ENCODE measurements at regions of chr3 and their contacts with region 1.

Region 1: DNA sequence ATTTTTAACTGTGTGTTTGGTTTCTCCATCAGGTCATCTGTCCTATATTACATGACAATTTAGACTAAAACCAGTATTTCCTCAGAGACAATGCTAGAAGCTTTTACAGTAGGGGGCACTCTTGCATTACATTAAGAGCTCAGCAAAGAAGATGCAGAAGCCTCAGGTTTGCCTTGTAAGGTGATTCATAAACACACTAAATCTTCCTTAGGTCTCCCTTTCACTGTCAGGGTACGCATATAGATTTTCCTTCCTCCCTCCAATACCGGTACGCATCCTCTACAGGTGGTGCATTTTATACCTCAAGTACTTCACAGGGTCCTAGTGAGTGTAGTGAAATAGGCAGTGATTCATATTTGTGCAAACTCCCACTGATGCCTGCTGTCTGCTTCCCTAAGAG is 46.5 kb downstream of the CD86 start:
- DNase-seq: peak; percentile 92
- ATAC-seq: peak; percentile 66
- H3K4me3 ChIP-seq: peak overlapping the region; percentile 17; the same call in 1 of the 2 replicates
- H3K27ac ChIP-seq: peak overlapping the region; percentile 76
- H3K4me1 ChIP-seq: peaks cover 71% of the 10 kb centered on the region
- H3K27me3 ChIP-seq: no peaks in the 10 kb centered on the region
- CTCF ChIP-seq: peak; percentile 57 to 88 (median 70)
- EP300 ChIP-seq: no peak
- POLR2A ChIP-seq: no peak
- RAD21 ChIP-seq: peak; percentile 97

Region 2: DNA sequence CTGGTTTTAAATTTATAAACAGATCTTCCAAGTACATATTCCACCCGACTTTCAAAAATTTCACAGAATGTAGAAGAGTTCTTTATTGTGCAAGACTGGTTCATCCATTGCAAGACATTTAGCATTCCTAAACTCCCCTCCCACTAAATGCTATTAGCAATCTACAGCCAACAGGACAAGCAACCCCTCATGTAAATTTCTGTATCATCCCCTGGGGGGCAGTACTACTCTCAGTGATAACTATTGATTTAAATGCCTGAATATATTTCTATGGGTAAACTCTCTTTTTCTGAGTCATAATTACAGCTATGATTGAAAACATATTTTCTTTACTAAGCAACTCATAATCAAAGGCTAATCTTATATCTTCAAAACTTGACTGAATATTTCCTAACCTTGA is 218.1 kb before region 1 on chr3:
- CTCF ChIA-PET with region 1: interaction called, 3 read pairs
- POLR2A ChIA-PET with region 1: no interaction called
- RAD21 ChIA-PET with region 1: interaction called, 13 read pairs
- SMC1A ChIA-PET with region 1: interaction called, 21 read pairs
- in situ Hi-C with region 1: no loop called
- intact Hi-C with region 1: loop called (anchors 1 kb)
- DNase-seq: no peak
- ATAC-seq: peak; percentile 73
- H3K4me3 ChIP-seq: no peak overlapping the region
- H3K27ac ChIP-seq: no peak overlapping the region
- H3K4me1 ChIP-seq: no peaks in the 10 kb centered on the region
- H3K27me3 ChIP-seq: no peaks in the 10 kb centered on the region
- CTCF ChIP-seq: peak; percentile 21 to 38 (median 27); a peak in 1 of 6 replicates
- EP300 ChIP-seq: no peak
- POLR2A ChIP-seq: no peak
- RAD21 ChIP-seq: peak; percentile 48

Region 3: DNA sequence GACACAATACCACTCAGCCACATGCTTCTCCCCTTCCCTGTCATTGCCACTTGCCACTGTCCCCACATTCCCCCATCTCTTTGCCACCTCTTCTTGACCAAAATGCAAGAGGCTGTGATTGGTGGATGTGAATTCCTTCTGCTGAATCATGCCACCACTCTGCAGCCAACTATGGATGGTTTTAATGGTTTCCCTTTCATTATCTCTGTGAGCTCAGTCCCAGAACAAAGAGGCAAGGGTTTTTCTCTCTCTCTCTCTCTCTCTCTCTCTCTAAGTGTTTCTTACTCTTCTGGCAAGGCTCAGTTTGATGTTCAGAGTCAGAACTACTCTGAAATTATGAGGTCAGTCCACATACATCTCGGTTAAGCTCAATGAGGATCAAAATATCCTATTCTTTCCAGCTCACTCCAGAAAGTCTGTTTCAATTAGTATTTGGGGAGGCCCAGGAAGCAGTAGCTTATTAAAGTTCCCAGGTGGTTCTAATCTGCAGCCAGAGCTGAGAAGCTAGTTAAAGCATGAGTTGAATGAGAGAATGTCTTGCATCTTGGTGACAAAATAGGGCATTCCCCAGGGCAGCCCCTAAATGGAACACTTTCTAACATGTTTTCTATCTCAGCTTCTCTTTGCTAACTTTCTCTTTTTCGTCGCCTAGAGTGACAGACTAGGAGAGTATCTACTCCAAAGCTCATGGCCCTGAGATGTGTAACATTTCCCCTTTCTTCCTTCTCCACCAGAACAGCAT is 71.1 kb before region 1 on chr3:
- CTCF ChIA-PET with region 1: interaction called, 16 read pairs
- POLR2A ChIA-PET with region 1: interaction called, 3 read pairs
- RAD21 ChIA-PET with region 1: interaction called, 38 read pairs
- SMC1A ChIA-PET with region 1: interaction called, 32 read pairs
- in situ Hi-C with region 1: no loop called
- intact Hi-C with region 1: no loop called
- DNase-seq: peak; percentile 74
- ATAC-seq: peak; percentile 86
- H3K4me3 ChIP-seq: peak overlapping the region; percentile 41; the same call in 1 of the 2 replicates
- H3K27ac ChIP-seq: peak overlapping the region; percentile 89
- H3K4me1 ChIP-seq: peaks cover 37% of the 10 kb centered on the region
- H3K27me3 ChIP-seq: no peaks in the 10 kb centered on the region
- CTCF ChIP-seq: no peak
- EP300 ChIP-seq: no peak
- POLR2A ChIP-seq: 0 out of 2 replicates have a peak, but pooled peaks have one; percentile 25
- RAD21 ChIP-seq: peak; percentile 11; the same call in 1 of the 2 replicates

Region 4: DNA sequence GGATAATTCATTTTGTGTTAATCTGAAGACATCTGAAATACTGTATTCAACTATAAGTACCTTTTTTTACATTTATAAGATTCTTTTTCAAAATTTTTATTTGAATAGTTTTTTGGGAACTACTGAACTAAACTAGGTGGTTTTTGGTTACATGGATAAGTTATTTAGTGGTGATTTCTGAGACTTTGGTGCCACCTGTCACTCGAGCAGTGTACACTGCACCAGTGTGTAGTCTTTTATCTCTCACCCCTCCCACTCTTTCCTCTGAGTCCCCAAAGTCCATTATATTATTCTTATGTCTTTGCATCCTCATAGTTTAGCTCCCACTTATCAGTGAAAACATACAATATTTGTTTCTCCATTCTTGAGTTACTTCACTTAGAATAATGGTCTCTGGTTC is 11.1 kb after region 1 on chr3:
- CTCF ChIA-PET with region 1: interaction called, 58 read pairs
- POLR2A ChIA-PET with region 1: interaction called, 10 read pairs
- RAD21 ChIA-PET with region 1: interaction called, 38 read pairs
- SMC1A ChIA-PET with region 1: interaction called, 78 read pairs
- in situ Hi-C with region 1: no loop called
- intact Hi-C with region 1: no loop called
- DNase-seq: no peak
- ATAC-seq: peak; percentile 71; the same call in 2 of the 3 replicates
- H3K4me3 ChIP-seq: no peak overlapping the region
- H3K27ac ChIP-seq: no peak overlapping the region
- H3K4me1 ChIP-seq: peaks cover 8% of the 10 kb centered on the region; the same call in 1 of the 2 replicates
- H3K27me3 ChIP-seq: no peaks in the 10 kb centered on the region
- CTCF ChIP-seq: no peak
- EP300 ChIP-seq: no peak
- POLR2A ChIP-seq: no peak
- RAD21 ChIP-seq: no peak

Region 5: DNA sequence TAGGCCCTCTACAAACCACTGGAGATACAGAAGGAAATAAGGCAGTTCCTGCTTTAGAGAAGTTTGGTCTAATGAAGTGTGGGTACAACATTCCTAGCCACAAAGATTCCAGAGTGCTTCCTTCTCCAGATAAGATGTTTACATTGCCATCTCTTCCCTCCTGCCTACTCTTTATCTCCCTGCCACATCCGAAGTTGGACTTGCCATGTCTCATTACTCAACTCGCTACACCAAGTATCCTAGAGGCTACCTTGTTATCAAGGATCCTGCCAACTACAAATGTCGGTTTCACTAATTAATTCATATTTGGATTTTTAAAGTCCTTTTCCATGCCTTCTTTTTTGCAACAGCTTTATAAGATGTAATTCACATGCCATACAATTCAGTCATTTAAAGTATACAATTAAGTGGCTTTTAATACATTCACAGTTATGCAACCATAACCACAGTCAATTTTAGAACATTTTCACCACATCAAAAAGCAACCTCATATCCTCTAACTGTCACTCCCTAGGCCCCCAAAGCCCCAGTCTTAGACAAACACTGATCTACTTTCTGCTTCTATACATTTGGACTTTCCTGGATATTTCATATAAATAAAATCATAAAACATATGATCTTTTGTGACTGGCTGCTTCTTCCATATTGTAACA is 169.7 kb after region 1 on chr3:
- CTCF ChIA-PET with region 1: interaction called, 5 read pairs
- POLR2A ChIA-PET with region 1: interaction called, 3 read pairs
- RAD21 ChIA-PET with region 1: interaction called, 86 read pairs
- SMC1A ChIA-PET with region 1: interaction called, 590 read pairs
- in situ Hi-C with region 1: no loop called
- intact Hi-C with region 1: no loop called
- DNase-seq: no peak
- ATAC-seq: peak; percentile 58
- H3K4me3 ChIP-seq: peak overlapping the region; percentile 17; the same call in 1 of the 2 replicates
- H3K27ac ChIP-seq: peak overlapping the region; percentile 43
- H3K4me1 ChIP-seq: peaks cover 38% of the 10 kb centered on the region
- H3K27me3 ChIP-seq: no peaks in the 10 kb centered on the region
- CTCF ChIP-seq: no peak
- EP300 ChIP-seq: peak in 1 of 2 experiments; percentile 85; a peak in 3 of 4 replicates
- POLR2A ChIP-seq: no peak
- RAD21 ChIP-seq: no peak

Region 6: GRCh38 chr3:122365073-122365472 is 263.4 kb after region 1 on chr3:
- CTCF ChIA-PET with region 1: interaction called, 10 read pairs
- POLR2A ChIA-PET with region 1: interaction called, 4 read pairs
- RAD21 ChIA-PET with region 1: interaction called, 12 read pairs
- SMC1A ChIA-PET with region 1: interaction called, 7 read pairs
- in situ Hi-C with region 1: no loop called
- intact Hi-C with region 1: no loop called
- DNase-seq: no peak
- ATAC-seq: peak; percentile 81
- H3K4me3 ChIP-seq: no peak overlapping the region
- H3K27ac ChIP-seq: peak overlapping the region; percentile 0; the same call in 1 of the 2 replicates
- H3K4me1 ChIP-seq: no peaks in the 10 kb centered on the region
- H3K27me3 ChIP-seq: no peaks in the 10 kb centered on the region
- CTCF ChIP-seq: no peak
- EP300 ChIP-seq: no peak
- POLR2A ChIP-seq: no peak
- RAD21 ChIP-seq: no peak